Posterior vena cava (tissue), 2 donors: ENCODE measurements at regions of chr17 and their contacts with region 1.

Region 1: DNA sequence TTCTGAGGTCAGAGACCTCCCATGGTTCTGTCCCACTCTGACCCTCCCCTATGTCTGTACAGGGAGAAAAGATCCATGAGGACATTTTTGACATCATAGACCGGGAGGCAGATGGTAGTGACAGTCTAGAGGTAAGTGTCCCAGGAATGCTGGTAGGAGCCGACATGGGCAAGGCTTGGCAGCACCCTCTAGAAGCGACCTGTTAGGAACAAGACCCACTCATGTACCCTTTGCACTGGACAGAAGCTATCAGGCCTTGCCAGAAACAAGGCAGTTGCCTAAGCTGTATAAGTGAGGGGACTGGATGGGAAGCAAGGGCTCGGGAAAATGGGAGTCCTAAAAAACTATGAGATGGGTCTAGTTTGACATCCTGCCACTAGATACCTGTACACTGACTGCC is 2.5 kb downstream of the TUBG1 start:
- DNase-seq: no peak

Region 2: DNA sequence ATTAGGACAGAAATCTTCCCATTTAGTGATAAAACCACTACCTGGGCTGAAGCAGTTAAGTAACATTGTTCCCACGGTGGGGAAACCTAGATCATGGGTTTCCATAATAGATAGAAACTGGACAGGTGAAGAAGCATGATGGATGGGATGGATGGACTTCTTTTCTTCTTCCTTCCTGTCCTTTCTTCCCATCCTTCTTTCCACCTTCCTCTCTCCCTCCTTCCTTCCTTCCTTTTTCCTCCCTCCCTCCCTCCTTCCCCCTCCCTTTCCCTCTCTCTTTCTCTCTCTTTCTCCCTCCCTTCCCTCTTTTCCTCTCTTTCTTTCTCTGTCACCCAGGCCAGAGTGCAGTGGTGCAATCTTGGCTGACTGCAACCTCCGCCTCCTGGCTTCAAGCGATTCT is 37.5 kb before region 1 on chr17:
- intact Hi-C with region 1: no loop called
- DNase-seq: no peak

Region 3: GRCh38 chr17:42585353-42585752 is 26.7 kb before region 1 on chr17:
- intact Hi-C with region 1: loop called in 1 of 2 experiments (anchors 1 kb)
- DNase-seq: peak; percentile 44

Region 4: DNA sequence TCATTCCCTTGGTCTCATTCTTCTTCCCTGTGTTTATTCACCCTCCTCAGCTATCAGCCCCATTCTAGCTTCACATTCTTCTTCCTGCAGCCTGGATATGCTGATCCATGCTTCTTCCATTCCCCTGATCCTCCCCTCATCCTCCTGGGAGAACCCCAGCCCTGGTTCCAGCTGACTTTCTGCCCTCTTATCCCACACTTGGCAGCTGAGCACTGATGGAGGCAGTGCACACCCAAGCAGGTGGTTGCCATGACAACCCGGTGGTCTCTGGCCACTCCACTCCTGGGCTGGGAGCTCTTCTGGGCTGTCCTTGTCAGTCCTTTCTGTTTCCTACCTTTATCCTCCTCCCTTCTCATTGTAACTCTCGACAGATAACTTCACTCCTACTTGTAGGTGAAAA is 30.3 kb after region 1 on chr17:
- intact Hi-C with region 1: no loop called
- DNase-seq: peak; percentile 19